Lower lobe of right lung (tissue), 2 donors: ENCODE measurements at regions of chr10 and their contacts with region 1.

Region 1: DNA sequence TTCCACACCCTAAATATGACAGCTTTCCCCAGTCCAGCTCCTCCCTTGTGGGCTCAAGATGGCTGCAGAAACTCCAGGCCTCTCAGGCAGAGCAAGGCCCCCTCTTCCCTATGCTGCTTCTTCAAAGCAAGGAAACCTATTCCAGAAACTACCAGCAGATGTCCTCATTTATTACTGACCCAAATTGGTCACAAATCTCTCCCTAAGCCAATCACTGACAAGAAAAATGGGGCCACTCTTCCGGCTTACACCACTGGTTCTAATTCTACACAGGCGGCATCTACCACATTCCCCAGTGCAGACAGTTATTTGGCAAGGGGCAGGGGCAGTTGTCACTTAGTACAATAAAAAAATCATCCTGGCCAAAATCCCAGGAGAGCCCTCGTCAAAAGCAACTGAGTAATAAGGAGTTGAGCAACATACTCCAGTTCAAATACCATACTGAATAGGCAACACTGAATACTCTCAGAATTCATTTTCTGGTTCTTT is 150.4 kb downstream of the SFMBT2 start:
- DNase-seq: no peak
- ATAC-seq: peak; percentile 87 to 90
- H3K4me3 ChIP-seq: no peak overlapping the region
- H3K27ac ChIP-seq: no peak overlapping the region
- H3K4me1 ChIP-seq: peaks cover 24% of the 10 kb centered on the region
- H3K27me3 ChIP-seq: no peaks in the 10 kb centered on the region
- CTCF ChIP-seq: peak; percentile 73

Region 2: DNA sequence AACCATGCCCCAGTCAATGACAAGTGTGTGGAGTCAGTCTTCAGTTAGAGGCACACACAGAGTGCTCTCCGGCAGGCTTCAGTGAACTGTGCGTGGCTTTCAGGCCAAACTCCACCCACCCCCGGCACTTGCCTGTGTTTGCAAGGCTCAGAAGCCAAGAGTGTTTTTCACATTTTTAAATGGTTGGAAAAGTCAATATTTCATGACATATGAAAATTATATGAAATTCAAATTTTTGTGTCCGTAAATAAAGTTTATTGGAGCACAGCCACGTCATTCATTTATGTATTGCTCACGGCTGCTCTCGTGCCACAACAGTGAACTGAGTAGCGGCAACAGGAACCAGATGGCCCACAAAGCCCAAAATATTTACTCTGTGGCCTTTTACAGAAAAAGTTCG is 45.7 kb after region 1 on chr10:
- intact Hi-C with region 1: no loop called
- DNase-seq: no peak
- ATAC-seq: no peak
- H3K4me3 ChIP-seq: no peak overlapping the region
- H3K27ac ChIP-seq: no peak overlapping the region
- H3K4me1 ChIP-seq: peaks cover 14% of the 10 kb centered on the region
- H3K27me3 ChIP-seq: no peaks in the 10 kb centered on the region
- CTCF ChIP-seq: no peak

Region 3: DNA sequence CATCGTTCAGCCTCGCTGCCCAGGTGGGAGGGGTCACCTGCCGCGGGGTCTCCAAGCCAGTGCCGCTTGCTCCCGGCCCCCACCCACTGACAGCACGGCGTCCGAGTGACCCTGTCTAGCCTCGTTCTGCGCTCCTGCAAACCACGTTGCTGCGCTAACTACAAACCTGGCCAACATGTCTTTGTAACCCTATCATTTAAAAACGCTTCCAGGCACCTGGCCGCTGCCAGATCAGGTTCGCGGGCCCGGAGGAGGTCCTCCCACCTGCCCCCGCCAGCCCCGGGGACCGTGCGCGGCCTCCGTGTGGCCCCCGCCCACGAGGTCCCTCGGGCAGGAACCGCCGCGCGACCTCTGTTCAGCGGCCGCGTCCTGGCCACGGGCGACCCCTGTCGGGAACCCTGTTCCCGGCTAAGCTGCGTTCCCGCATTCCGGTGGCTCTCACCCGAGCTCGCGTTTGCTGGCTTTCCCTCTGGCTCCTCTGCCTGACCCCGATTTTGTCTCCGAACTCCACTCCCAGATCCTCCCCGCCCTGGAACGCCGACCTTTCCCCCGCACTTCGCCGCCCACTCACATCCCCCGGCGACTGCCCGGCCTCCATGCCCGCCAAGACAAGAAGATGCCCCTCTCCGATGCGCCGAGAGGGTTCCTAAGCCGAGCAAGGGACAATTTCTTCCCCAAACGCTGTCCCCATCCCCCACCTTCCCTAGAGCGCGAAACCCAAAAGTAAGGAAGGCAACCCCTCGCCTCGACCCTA is 148.0 kb after region 1 on chr10:
- intact Hi-C with region 1: loop called (anchors 10 kb)
- DNase-seq: peak; percentile 71
- ATAC-seq: peak; percentile 62 to 67
- H3K4me3 ChIP-seq: peak overlapping the region; percentile 74
- H3K27ac ChIP-seq: peak overlapping the region; percentile 76
- H3K4me1 ChIP-seq: peaks cover 44% of the 10 kb centered on the region
- H3K27me3 ChIP-seq: peaks cover 37% of the 10 kb centered on the region
- CTCF ChIP-seq: peak; percentile 52